Heart left ventricle (tissue), 16 donors: ENCODE measurements at regions of chr2 and their contacts with region 1.

Region 1: GRCh38 chr2:11329781-11330180 is 14.7 kb downstream of the ROCK2 start:
- DNase-seq: no peak
- ATAC-seq: no peak
- H3K4me3 ChIP-seq: peak overlapping the region in 2 of 12 donors; percentile 23 to 25
- H3K27ac ChIP-seq: peak overlapping the region in 4 of 12 donors; percentile 0 to 51 (median 18)
- H3K4me1 ChIP-seq: peaks cover 0 to 49% (median 32%) of the 10 kb centered on the region in 12 donors
- H3K27me3 ChIP-seq: no peaks in the 10 kb centered on the region
- CTCF ChIP-seq: no peak
- POLR2A ChIP-seq: no peak

Region 2: GRCh38 chr2:11281186-11281585 is 48.6 kb before region 1 on chr2:
- intact Hi-C with region 1: loop called in 2 of 10 experiments (anchors 5 to 10 kb)
- DNase-seq: no peak
- ATAC-seq: no peak
- H3K4me3 ChIP-seq: no peak overlapping the region
- H3K27ac ChIP-seq: no peak overlapping the region
- H3K4me1 ChIP-seq: peaks cover 0 to 15% (median 0%) of the 10 kb centered on the region in 12 donors
- H3K27me3 ChIP-seq: no peaks in the 10 kb centered on the region
- CTCF ChIP-seq: no peak
- POLR2A ChIP-seq: no peak

Region 3: GRCh38 chr2:11286749-11287148 is 43.0 kb before region 1 on chr2:
- intact Hi-C with region 1: loop called in 2 of 10 experiments (anchors 5 to 10 kb)
- DNase-seq: peak in 1 of 5 donors; percentile 27
- ATAC-seq: peak; percentile 82 to 89 (median 88)
- H3K4me3 ChIP-seq: no peak overlapping the region
- H3K27ac ChIP-seq: peak overlapping the region in 11 of 12 donors; percentile 7 to 63 (median 24)
- H3K4me1 ChIP-seq: peaks cover 0 to 50% (median 27%) of the 10 kb centered on the region in 12 donors
- H3K27me3 ChIP-seq: no peaks in the 10 kb centered on the region
- CTCF ChIP-seq: no peak
- POLR2A ChIP-seq: no peak